PC-3 (cell line): ENCODE measurements at regions of chr4 and their contacts with region 1.

Region 1: GRCh38 chr4:55808186-55808585 is 11.4 kb upstream of the EXOC1L start:
- DNase-seq: no peak
- ATAC-seq: peak; percentile 20; the same call in 1 of the 2 replicates
- H3K4me3 ChIP-seq: no peak overlapping the region
- H3K27ac ChIP-seq: no peak overlapping the region
- H3K4me1 ChIP-seq: no peaks in the 10 kb centered on the region
- H3K27me3 ChIP-seq: peaks cover 35% of the 10 kb centered on the region
- CTCF ChIP-seq: no peak

Region 2: DNA sequence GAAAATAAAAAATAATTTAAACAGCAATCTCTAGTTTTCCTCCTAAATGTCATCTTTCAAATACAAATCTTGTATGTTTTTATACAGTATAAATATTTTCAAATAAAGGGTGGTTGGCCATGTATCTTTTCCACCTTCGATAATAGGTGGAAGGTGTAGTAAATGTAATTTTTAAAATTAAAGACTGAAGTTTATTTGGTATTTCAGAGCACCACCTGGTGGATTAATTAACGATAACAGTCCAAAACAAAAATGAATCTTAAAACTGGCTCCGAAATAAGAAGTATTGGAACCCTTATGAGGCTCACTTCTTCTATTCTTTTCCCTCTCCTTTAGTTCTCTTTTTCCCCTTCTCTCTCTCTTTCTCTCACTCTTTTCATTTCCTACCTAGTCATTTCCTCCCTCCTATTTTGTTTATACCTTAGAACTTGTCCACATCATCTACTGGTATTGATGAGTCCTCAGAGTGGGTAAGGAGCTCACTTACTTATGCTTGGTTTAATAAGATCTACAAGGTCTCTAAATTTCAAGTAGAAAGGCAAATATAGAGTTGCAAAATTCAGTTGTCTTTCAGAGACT is 71.5 kb before region 1 on chr4:
- CTCF ChIA-PET with region 1: no interaction called
- POLR2A ChIA-PET with region 1: no interaction called
- intact Hi-C with region 1: no loop called
- DNase-seq: peak; percentile 64
- ATAC-seq: no peak
- H3K4me3 ChIP-seq: no peak overlapping the region
- H3K27ac ChIP-seq: no peak overlapping the region
- H3K4me1 ChIP-seq: peaks cover 15% of the 10 kb centered on the region
- H3K27me3 ChIP-seq: no peaks in the 10 kb centered on the region
- CTCF ChIP-seq: peak; percentile 77

Region 3: GRCh38 chr4:55752810-55753209 is 55.4 kb before region 1 on chr4:
- CTCF ChIA-PET with region 1: no interaction called
- POLR2A ChIA-PET with region 1: no interaction called
- intact Hi-C with region 1: no loop called
- DNase-seq: no peak
- ATAC-seq: no peak
- H3K4me3 ChIP-seq: no peak overlapping the region
- H3K27ac ChIP-seq: no peak overlapping the region
- H3K4me1 ChIP-seq: peaks cover 19% of the 10 kb centered on the region
- H3K27me3 ChIP-seq: no peaks in the 10 kb centered on the region
- CTCF ChIP-seq: no peak

Region 4: GRCh38 chr4:55793479-55793878 is 14.7 kb before region 1 on chr4:
- CTCF ChIA-PET with region 1: no interaction called
- POLR2A ChIA-PET with region 1: interaction called, 10 read pairs
- intact Hi-C with region 1: no loop called
- DNase-seq: no peak
- ATAC-seq: no peak
- H3K4me3 ChIP-seq: no peak overlapping the region
- H3K27ac ChIP-seq: no peak overlapping the region
- H3K4me1 ChIP-seq: no peaks in the 10 kb centered on the region
- H3K27me3 ChIP-seq: peaks cover 31% of the 10 kb centered on the region
- CTCF ChIP-seq: no peak